HepG2 (cell line): ENCODE measurements at regions of chr4 and their contacts with region 1.

Region 1: GRCh38 chr4:165327211-165328100 is at the start of gene MSMO1:
- DNase-seq: peak; percentile 97
- ATAC-seq: peak; percentile 97
- H3K4me3 ChIP-seq: peak within 1 kb of the TSS; percentile 77 to 96 (median 87)
- H3K27ac ChIP-seq: peak within 1 kb of the TSS; percentile 94
- H3K4me1 ChIP-seq: peaks cover 37% of the 10 kb centered on the region
- H3K27me3 ChIP-seq: peaks cover 0 to 5% of the 10 kb centered on the region in 2 experiments; a peak in 1 of 5 replicates
- CTCF ChIP-seq: no peak
- EP300 ChIP-seq: peak in 1 of 2 experiments; percentile 78; a peak in 2 of 4 replicates
- POLR2A ChIP-seq: peak; percentile 76 to 96
- RAD21 ChIP-seq: peak; percentile 30
- total RNA-seq, gene MSMO1: 135 and 216 TPM in 2 replicates

Region 2: GRCh38 chr4:165112368-165113139 is 214.9 kb before region 1 on chr4 and contains the start of gene TMEM192:
- CTCF ChIA-PET with region 1: no interaction called
- POLR2A ChIA-PET with region 1: interaction called, 13 read pairs
- in situ Hi-C with region 1: no loop called
- intact Hi-C with region 1: loop called (anchors 5 kb)
- DNase-seq: peak; percentile 85
- ATAC-seq: peak; percentile 96
- H3K4me3 ChIP-seq: peak within 1 kb of the TSS; percentile 78 to 96 (median 91)
- H3K27ac ChIP-seq: peak within 1 kb of the TSS; percentile 92
- H3K4me1 ChIP-seq: peaks cover 16% of the 10 kb centered on the region
- H3K27me3 ChIP-seq: no peaks in the 10 kb centered on the region
- CTCF ChIP-seq: peak; percentile 27; the same call in 1 of the 2 replicates
- EP300 ChIP-seq: peak in 1 of 2 experiments; percentile 16; a peak in 1 of 4 replicates
- POLR2A ChIP-seq: peak; percentile 80 to 92
- RAD21 ChIP-seq: peak; percentile 43; the same call in 1 of the 2 replicates
- total RNA-seq, gene TMEM192: 14.1 and 19.9 TPM in 2 replicates

Region 3: GRCh38 chr4:165131247-165131832 is 196.1 kb before region 1 on chr4:
- CTCF ChIA-PET with region 1: no interaction called
- POLR2A ChIA-PET with region 1: interaction called, 5 read pairs
- in situ Hi-C with region 1: no loop called
- intact Hi-C with region 1: loop called (anchors 5 kb)
- DNase-seq: peak; percentile 57
- ATAC-seq: peak; percentile 93
- H3K4me3 ChIP-seq: no peak overlapping the region
- H3K27ac ChIP-seq: no peak overlapping the region
- H3K4me1 ChIP-seq: peaks cover 15% of the 10 kb centered on the region
- H3K27me3 ChIP-seq: peaks cover 0 to 11% of the 10 kb centered on the region in 2 experiments; a peak in 2 of 5 replicates
- CTCF ChIP-seq: peak; percentile 85
- EP300 ChIP-seq: no peak
- POLR2A ChIP-seq: no peak
- RAD21 ChIP-seq: peak; percentile 82

Region 4: GRCh38 chr4:165378745-165379677 is 51.6 kb after region 1 on chr4 and contains the start of gene CPE:
- CTCF ChIA-PET with region 1: no interaction called
- POLR2A ChIA-PET with region 1: interaction called, 7 read pairs
- in situ Hi-C with region 1: no loop called
- intact Hi-C with region 1: loop called (anchors 2 kb)
- DNase-seq: peak; percentile 81
- ATAC-seq: peak; percentile 99
- H3K4me3 ChIP-seq: peak within 1 kb of the TSS; percentile 79 to 91 (median 85)
- H3K27ac ChIP-seq: peak within 1 kb of the TSS; percentile 59
- H3K4me1 ChIP-seq: peaks cover 49% of the 10 kb centered on the region
- H3K27me3 ChIP-seq: no peaks in the 10 kb centered on the region; a peak in 1 of 5 replicates
- CTCF ChIP-seq: peak; percentile 84
- EP300 ChIP-seq: no peak
- POLR2A ChIP-seq: peak; percentile 94 to 95
- RAD21 ChIP-seq: peak; percentile 87
- total RNA-seq, gene CPE: 94.9 and 268 TPM in 2 replicates

Region 5: GRCh38 chr4:165600959-165601683 is 273.7 kb after region 1 on chr4:
- CTCF ChIA-PET with region 1: no interaction called
- POLR2A ChIA-PET with region 1: no interaction called
- in situ Hi-C with region 1: no loop called
- intact Hi-C with region 1: no loop called
- DNase-seq: no peak
- ATAC-seq: no peak
- H3K4me3 ChIP-seq: no peak overlapping the region
- H3K27ac ChIP-seq: no peak overlapping the region
- H3K4me1 ChIP-seq: no peaks in the 10 kb centered on the region
- H3K27me3 ChIP-seq: no peaks in the 10 kb centered on the region
- CTCF ChIP-seq: no peak
- EP300 ChIP-seq: no peak
- POLR2A ChIP-seq: no peak
- RAD21 ChIP-seq: no peak